ENCODE measurements at regions of chr18 and their contacts with region 1.

Region 1: GRCh38 chr18:2932247-2933181 is 80.4 kb downstream of the LPIN2 start:
- DNase-seq: no peak
- ATAC-seq: peak; percentile 49 to 82 (median 62)
- H3K4me3 ChIP-seq: no peak overlapping the region
- H3K27ac ChIP-seq: no peak overlapping the region
- H3K4me1 ChIP-seq: no peaks in the 10 kb centered on the region
- H3K27me3 ChIP-seq: no peaks in the 10 kb centered on the region
- CTCF ChIP-seq: peak; percentile 82

Region 2: DNA sequence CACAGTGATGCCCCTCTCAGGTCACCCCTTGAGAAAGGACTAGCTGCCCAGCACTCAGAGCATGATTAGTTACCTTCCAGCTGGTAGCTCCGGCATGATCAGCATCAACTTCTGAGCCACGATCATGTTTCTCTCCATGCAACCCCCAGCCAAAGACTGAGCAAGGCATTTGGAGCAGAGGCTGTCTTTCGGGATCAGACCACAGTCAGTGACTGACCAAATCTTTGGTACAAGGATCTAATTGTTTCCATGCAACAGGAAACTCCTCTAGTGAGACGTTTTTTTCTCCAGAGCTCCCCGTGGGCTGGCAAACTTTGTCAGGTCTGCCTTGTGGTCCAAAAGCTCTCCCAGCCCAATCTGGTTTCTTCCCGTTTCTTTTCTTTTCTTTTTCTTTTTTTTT is 605.5 kb before region 1 on chr18:
- intact Hi-C with region 1: no loop called
- DNase-seq: no peak
- ATAC-seq: no peak
- H3K4me3 ChIP-seq: no peak overlapping the region
- H3K27ac ChIP-seq: no peak overlapping the region
- H3K4me1 ChIP-seq: no peaks in the 10 kb centered on the region
- H3K27me3 ChIP-seq: peaks cover 0 to 3% (median 0%) of the 10 kb centered on the region in 3 donors
- CTCF ChIP-seq: no peak

Region 3: GRCh38 chr18:2805970-2806943 is 126.3 kb before region 1 on chr18:
- intact Hi-C with region 1: no loop called
- DNase-seq: no peak
- ATAC-seq: no peak
- H3K4me3 ChIP-seq: no peak overlapping the region
- H3K27ac ChIP-seq: no peak overlapping the region
- H3K4me1 ChIP-seq: no peaks in the 10 kb centered on the region
- H3K27me3 ChIP-seq: no peaks in the 10 kb centered on the region
- CTCF ChIP-seq: no peak

Region 4: DNA sequence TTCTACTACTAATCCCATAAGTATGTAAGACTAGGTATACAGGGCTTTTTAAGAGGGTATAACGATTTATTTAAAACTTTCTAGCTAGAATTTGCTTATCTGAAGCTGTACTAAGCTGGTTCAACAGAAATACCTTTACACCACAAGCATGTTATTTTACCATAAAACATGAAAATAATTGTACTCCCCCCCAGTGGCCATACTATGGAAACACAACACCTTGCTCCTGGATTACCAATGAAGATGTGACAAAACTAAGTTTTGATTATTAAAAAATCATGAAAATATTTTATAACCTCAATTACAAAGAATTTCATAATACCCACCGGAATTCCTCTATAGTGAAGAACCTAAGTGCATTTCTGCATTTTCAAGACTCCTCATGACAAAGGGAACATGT is 53.1 kb after region 1 on chr18:
- intact Hi-C with region 1: loop called in 1 of 2 experiments (anchors 5 kb)
- DNase-seq: no peak
- ATAC-seq: no peak
- H3K4me3 ChIP-seq: no peak overlapping the region
- H3K27ac ChIP-seq: no peak overlapping the region
- H3K4me1 ChIP-seq: peaks cover 18% of the 10 kb centered on the region
- H3K27me3 ChIP-seq: no peaks in the 10 kb centered on the region
- CTCF ChIP-seq: peak; percentile 41

Region 5: DNA sequence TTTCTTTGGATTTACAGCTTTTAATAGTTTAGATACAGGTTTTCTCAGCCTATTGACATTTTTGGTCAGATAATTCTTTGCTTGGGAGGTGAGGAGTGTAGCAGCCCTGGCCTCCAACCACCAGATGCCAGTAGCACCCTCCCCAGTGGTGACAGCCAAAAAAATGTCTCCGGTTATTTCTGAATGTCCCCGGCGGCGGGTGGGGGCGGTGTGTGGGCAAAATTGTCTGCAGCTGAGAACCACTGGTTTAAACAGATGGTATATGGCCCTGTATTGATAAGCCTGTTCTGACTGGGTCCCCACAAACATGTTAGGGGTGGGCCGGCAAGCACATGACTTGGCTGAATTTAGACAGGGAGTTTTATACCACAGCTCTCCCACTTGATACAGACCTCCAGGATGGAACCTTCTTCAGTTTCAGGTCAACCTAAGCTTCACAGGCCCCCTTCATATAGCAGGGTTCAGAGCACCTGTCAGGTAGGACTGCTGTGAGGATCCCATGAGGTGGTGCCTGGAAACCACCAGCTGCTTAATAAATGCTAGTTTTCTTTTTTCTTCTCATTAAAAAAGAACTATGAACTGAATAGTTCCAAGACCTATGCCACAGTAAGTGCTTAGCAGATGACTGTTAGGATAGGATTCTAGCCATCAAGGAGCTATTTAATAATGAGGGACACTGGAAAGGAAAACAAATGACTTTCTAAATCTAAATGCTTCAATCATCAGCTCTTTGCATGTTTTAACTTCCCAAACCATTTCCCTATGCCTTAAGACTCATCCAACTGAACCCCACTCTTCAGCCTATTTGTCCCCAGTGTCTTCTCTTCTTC is 62.3 kb after region 1 on chr18:
- intact Hi-C with region 1: loop called in 1 of 2 experiments (anchors 5 kb)
- DNase-seq: peak; percentile 32 to 63
- ATAC-seq: peak in 2 of 4 donors; percentile 57 to 59
- H3K4me3 ChIP-seq: no peak overlapping the region
- H3K27ac ChIP-seq: no peak overlapping the region
- H3K4me1 ChIP-seq: peaks cover 17% of the 10 kb centered on the region
- H3K27me3 ChIP-seq: no peaks in the 10 kb centered on the region
- CTCF ChIP-seq: no peak

Region 6: GRCh38 chr18:3062798-3063680 is 130.5 kb after region 1 on chr18:
- intact Hi-C with region 1: loop called (anchors 2 kb)
- DNase-seq: peak; percentile 59 to 80
- ATAC-seq: peak; percentile 63 to 83 (median 76)
- H3K4me3 ChIP-seq: no peak overlapping the region
- H3K27ac ChIP-seq: no peak overlapping the region
- H3K4me1 ChIP-seq: no peaks in the 10 kb centered on the region
- H3K27me3 ChIP-seq: no peaks in the 10 kb centered on the region
- CTCF ChIP-seq: peak; percentile 74

Region 7: DNA sequence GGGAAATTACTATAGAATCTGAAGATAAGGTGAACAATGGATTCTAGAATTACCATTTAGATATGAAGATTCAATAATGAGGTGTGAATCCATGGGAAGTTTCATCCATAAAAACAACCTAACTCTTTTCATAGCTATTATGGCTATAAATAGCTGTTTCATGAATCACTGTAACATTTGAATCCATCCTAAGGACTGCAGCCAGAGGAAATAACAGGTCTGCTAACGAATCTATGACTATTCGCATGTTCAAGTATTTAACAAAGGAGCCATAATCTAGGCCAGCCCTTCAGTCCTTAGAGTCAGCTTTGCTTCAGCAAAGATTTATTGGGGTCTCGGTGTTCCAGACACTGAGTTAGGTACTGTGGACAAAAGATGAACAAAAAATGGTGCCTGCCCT is 200.2 kb after region 1 on chr18:
- intact Hi-C with region 1: loop called in 1 of 2 experiments (anchors 5 kb)
- DNase-seq: no peak
- ATAC-seq: peak; percentile 44 to 80 (median 64)
- H3K4me3 ChIP-seq: no peak overlapping the region
- H3K27ac ChIP-seq: peak overlapping the region; percentile 53
- H3K4me1 ChIP-seq: peaks cover 11% of the 10 kb centered on the region
- H3K27me3 ChIP-seq: no peaks in the 10 kb centered on the region
- CTCF ChIP-seq: no peak

Region 8: GRCh38 chr18:3384664-3385189 is 452.2 kb after region 1 on chr18:
- intact Hi-C with region 1: no loop called
- DNase-seq: no peak
- ATAC-seq: no peak
- H3K4me3 ChIP-seq: no peak overlapping the region
- H3K27ac ChIP-seq: no peak overlapping the region
- H3K4me1 ChIP-seq: no peaks in the 10 kb centered on the region
- H3K27me3 ChIP-seq: no peaks in the 10 kb centered on the region
- CTCF ChIP-seq: no peak